Transverse colon (tissue), 4 donors: ENCODE measurements at regions of chr3 and their contacts with region 1.

Region 1: GRCh38 chr3:44439499-44440295 is 37.8 kb downstream of the ZNF445 start:
- DNase-seq: peak; percentile 69
- H3K4me3 ChIP-seq: peak overlapping the region in 1 of 4 donors; percentile 20
- H3K27ac ChIP-seq: peak overlapping the region; percentile 84 to 89 (median 88)
- H3K4me1 ChIP-seq: peaks cover 18 to 27% (median 20%) of the 10 kb centered on the region in 4 donors
- H3K27me3 ChIP-seq: no peaks in the 10 kb centered on the region
- CTCF ChIP-seq: no peak
- EP300 ChIP-seq: peak; percentile 77
- POLR2A ChIP-seq: peak; percentile 48

Region 2: DNA sequence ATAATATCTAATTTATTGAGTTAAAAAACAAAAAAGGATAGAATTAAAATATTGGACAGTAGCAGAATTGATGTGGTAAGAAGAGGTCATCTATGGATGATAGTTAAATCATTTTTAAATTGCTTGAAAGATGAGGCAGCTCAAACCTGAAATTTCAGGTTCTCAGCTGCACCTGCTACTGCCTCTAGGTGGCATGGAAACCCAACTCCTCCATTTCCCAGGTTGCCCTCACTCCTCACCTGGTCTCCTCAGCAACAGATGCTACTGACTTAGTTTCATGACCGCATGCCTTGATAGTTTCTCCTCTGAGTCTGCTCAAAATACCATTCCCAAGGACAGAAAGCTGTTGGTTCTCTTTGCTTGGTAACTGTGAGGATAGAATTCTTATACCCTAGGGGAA is 600.8 kb before region 1 on chr3:
- in situ Hi-C with region 1: no loop called
- intact Hi-C with region 1: no loop called
- DNase-seq: no peak
- H3K4me3 ChIP-seq: no peak overlapping the region
- H3K27ac ChIP-seq: no peak overlapping the region
- H3K4me1 ChIP-seq: no peaks in the 10 kb centered on the region
- H3K27me3 ChIP-seq: no peaks in the 10 kb centered on the region
- CTCF ChIP-seq: peak in 1 of 5 experiments; percentile 6
- EP300 ChIP-seq: no peak
- POLR2A ChIP-seq: no peak

Region 3: DNA sequence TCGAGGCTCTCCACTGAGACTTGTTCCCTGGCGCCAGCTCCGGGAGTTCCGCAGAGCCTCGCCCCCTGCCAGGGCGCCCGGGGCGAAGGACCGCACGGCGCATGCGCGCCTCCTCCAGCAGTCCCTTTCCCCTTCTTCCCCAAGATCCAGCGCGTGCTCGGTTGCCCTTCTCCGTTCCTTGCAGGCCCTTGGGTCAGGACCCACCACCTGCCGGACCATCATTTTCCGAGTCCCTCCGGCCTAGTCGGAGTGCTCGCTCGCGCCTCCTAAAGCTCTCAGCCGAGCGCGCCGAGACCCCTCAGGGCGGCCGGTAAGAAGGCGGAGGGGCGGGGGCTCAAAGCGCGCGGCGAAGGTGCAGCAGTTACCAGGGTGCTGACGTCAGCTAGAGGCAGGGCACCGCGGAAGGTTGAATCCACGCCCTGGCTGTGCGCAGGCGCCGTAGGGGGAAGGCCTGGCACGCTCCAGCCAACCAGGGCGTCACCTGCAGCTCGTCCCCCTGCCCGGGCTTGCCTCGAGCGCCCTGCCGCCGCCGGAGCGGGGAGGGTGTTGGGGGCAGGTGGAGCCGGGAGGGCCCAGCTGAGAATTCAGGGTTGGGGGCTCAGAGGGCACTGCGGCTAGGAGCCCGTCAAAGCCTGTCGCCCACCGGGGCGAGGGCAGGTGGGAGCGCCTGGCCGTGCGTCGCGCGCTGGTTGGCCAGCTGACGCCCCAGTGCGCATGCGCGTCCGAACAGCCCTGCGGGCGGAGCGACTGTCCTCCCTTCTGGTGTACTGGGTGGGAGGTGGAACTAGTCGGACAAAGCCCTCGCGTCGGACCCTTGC is 101.5 kb before region 1 on chr3 and contains the start of gene TCAIM:
- in situ Hi-C with region 1: no loop called
- intact Hi-C with region 1: loop called (anchors 2 kb)
- DNase-seq: peak; percentile 99
- H3K4me3 ChIP-seq: peak within 1 kb of the TSS; percentile 58 to 78 (median 70)
- H3K27ac ChIP-seq: peak within 1 kb of the TSS; percentile 89 to 97 (median 96)
- H3K4me1 ChIP-seq: peaks cover 0 to 28% (median 18%) of the 10 kb centered on the region in 4 donors
- H3K27me3 ChIP-seq: no peaks in the 10 kb centered on the region
- CTCF ChIP-seq: no peak
- EP300 ChIP-seq: no peak
- POLR2A ChIP-seq: peak; percentile 95
- total RNA-seq, gene TCAIM: 2.2 to 19.5 (median 14.6) TPM